ENCODE measurements at regions of chr3 and their contacts with region 1.

Region 1: GRCh38 chr3:157354722-157355121 is 81.9 kb upstream of the PTX3 start:
- DNase-seq: no peak
- H3K4me3 ChIP-seq: no peak overlapping the region
- H3K27ac ChIP-seq: no peak overlapping the region
- H3K4me1 ChIP-seq: no peaks in the 10 kb centered on the region
- H3K27me3 ChIP-seq: no peaks in the 10 kb centered on the region
- CTCF ChIP-seq: peak; percentile 42 to 57

Region 2: GRCh38 chr3:157148196-157148889 is 206.4 kb before region 1 on chr3:
- CTCF ChIA-PET with region 1: no interaction called
- dilution Hi-C with region 1: no loop called
- in situ Hi-C with region 1: no loop called
- intact Hi-C with region 1: no loop called
- DNase-seq: no peak
- H3K4me3 ChIP-seq: no peak overlapping the region
- H3K27ac ChIP-seq: no peak overlapping the region
- H3K4me1 ChIP-seq: no peaks in the 10 kb centered on the region
- H3K27me3 ChIP-seq: no peaks in the 10 kb centered on the region
- CTCF ChIP-seq: no peak

Region 3: GRCh38 chr3:157174649-157175498 is 179.8 kb before region 1 on chr3:
- CTCF ChIA-PET with region 1: no interaction called
- dilution Hi-C with region 1: no loop called
- in situ Hi-C with region 1: no loop called
- intact Hi-C with region 1: loop called (anchors 10 kb)
- DNase-seq: peak; percentile 99
- H3K4me3 ChIP-seq: peak overlapping the region; percentile 67 to 99 (median 97)
- H3K27ac ChIP-seq: peak overlapping the region; percentile 97
- H3K4me1 ChIP-seq: peaks cover 13% of the 10 kb centered on the region
- H3K27me3 ChIP-seq: peaks cover 1% of the 10 kb centered on the region
- CTCF ChIP-seq: no peak

Region 4: GRCh38 chr3:157231071-157231470 is 123.7 kb before region 1 on chr3:
- CTCF ChIA-PET with region 1: no interaction called
- dilution Hi-C with region 1: no loop called
- in situ Hi-C with region 1: no loop called
- intact Hi-C with region 1: no loop called
- DNase-seq: no peak
- H3K4me3 ChIP-seq: no peak overlapping the region
- H3K27ac ChIP-seq: no peak overlapping the region
- H3K4me1 ChIP-seq: no peaks in the 10 kb centered on the region
- H3K27me3 ChIP-seq: no peaks in the 10 kb centered on the region
- CTCF ChIP-seq: no peak

Region 5: GRCh38 chr3:157317895-157318294 is 36.8 kb before region 1 on chr3:
- CTCF ChIA-PET with region 1: interaction called, 3 read pairs
- dilution Hi-C with region 1: no loop called
- in situ Hi-C with region 1: no loop called
- intact Hi-C with region 1: loop called (anchors 5 kb)
- DNase-seq: no peak
- H3K4me3 ChIP-seq: no peak overlapping the region
- H3K27ac ChIP-seq: no peak overlapping the region
- H3K4me1 ChIP-seq: no peaks in the 10 kb centered on the region
- H3K27me3 ChIP-seq: peaks cover 2% of the 10 kb centered on the region
- CTCF ChIP-seq: no peak

Region 6: GRCh38 chr3:157447026-157447694 is 92.4 kb after region 1 on chr3:
- CTCF ChIA-PET with region 1: no interaction called
- dilution Hi-C with region 1: no loop called
- in situ Hi-C with region 1: no loop called
- intact Hi-C with region 1: loop called (anchors 2 kb)
- DNase-seq: peak; percentile 17
- H3K4me3 ChIP-seq: no peak overlapping the region
- H3K27ac ChIP-seq: no peak overlapping the region
- H3K4me1 ChIP-seq: no peaks in the 10 kb centered on the region
- H3K27me3 ChIP-seq: peaks cover 2% of the 10 kb centered on the region
- CTCF ChIP-seq: peak; percentile 48 to 70

Measured in mammary epithelial cell (primary cell).